Posterior cingulate gyrus (tissue), 11 donors: ENCODE measurements at regions of chr3 and their contacts with region 1.

Region 1: DNA sequence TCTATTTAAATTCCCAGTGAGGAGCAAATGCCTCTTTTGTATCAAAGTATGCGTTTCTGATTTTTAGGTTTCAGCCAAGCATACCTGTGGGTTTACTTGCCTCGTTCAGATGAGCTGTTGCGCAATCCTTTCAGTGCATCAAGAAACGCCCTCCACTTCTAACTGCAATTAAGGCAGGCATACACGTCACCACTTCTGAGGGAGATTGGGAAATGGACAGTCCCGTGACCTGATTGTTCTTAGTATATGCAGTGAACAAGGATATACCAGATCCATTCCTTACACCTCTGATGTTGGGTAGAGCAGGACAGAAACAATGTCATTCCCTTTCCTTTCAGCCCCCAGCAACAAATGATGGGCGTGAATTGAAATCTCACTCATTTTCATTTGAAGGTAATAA is 219.0 kb downstream of the ITPR1 start:
- DNase-seq: no peak

Region 2: GRCh38 chr3:4908433-4909157 is 196.5 kb after region 1 on chr3:
- intact Hi-C with region 1: no loop called
- DNase-seq: no peak

Region 3: DNA sequence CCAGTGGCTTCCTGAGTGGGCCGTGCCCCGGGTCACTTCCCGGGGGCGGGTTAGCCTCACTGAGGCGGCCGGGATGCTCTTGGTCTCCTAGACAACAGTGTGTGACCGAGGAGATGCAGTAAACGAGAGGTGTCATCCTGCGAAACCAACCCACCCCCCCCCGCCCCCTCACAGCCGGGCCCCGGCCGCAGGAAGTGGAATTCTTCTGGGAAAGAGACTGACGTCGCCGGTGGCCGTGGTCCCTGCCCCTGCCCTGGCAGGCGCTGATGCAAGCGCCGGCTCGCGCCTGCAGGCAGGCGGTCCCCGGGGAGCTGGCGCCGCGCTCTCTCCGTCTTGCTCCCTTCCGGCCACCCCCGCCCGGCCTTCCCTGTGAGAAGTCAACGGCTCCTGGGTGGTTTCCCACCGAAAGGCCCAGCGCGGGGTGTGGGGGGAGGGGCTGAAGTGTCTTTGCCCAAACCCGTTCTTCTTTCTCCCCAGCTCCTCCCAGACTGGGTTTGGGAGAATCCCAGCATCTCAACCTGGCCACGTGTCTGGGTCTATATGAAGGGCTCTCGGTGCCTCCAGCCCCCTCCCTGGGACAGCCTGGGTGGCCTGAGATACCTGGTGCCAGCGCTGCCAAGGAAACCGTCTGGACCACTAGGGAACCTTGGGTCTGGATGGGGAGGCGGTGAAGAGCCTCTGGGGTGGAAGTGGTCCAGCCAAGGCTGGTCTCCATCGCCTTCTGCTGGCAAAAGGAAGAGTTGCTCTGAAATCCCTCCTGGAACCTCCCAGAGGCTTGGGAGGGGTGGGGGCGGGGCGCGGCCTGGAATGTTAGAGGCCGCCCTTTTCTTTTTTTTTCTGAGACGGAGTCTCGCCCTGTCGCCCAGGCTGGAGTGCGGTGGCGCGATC is 314.4 kb after region 1 on chr3:
- intact Hi-C with region 1: loop called (anchors 2 kb)
- DNase-seq: peak; percentile 56 to 95 (median 74)

Region 4: DNA sequence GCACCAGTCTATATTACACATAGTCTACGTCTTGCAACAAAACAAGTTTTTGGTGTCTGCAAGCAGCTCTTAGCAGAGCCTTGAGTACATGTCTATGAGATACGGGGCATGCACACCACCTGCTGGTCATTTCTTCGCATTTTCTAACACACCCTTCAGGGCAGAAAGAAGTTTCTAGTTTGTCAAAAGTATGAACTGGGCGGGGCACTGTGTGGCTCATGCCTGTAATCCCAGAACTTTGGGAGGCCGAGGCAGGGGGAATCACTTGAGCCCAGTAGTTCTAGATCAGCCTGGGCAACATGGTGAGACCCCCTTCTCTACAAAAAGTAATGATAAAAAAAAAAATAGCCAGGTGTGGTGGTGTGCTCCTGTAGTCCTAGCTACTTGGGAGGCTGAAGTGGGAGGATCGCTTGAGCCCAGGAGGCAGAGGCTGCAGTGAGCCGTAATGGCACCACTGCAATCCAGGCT is 345.7 kb after region 1 on chr3:
- intact Hi-C with region 1: loop called (anchors 2 kb)
- DNase-seq: peak in 8 of 10 donors; percentile 33 to 93 (median 61)

Region 5: GRCh38 chr3:5122030-5122740 is 410.0 kb after region 1 on chr3 and contains the start of gene ARL8B:
- intact Hi-C with region 1: loop called (anchors 5 kb)
- DNase-seq: peak; percentile 88 to 99 (median 92)